ENCODE measurements at regions of chrX and their contacts with region 1.

Region 1: GRCh38 chrX:47650164-47651042 is at the start of gene ELK1:
- DNase-seq: peak; percentile 90 to 98
- H3K4me3 ChIP-seq: peak within 1 kb of the TSS; percentile 67 to 71
- H3K27ac ChIP-seq: peak within 1 kb of the TSS; percentile 85 to 87
- H3K4me1 ChIP-seq: peaks cover 0 to 7% of the 10 kb centered on the region in 2 donors
- H3K27me3 ChIP-seq: no peaks in the 10 kb centered on the region
- CTCF ChIP-seq: no peak
- total RNA-seq, gene ELK1: 146 TPM

Region 2: GRCh38 chrX:46693149-46693548 is 957.3 kb before region 1 on chrX:
- intact Hi-C with region 1: no loop called
- DNase-seq: no peak
- H3K4me3 ChIP-seq: no peak overlapping the region
- H3K27ac ChIP-seq: no peak overlapping the region
- H3K4me1 ChIP-seq: no peaks in the 10 kb centered on the region
- H3K27me3 ChIP-seq: no peaks in the 10 kb centered on the region
- CTCF ChIP-seq: no peak

Region 3: DNA sequence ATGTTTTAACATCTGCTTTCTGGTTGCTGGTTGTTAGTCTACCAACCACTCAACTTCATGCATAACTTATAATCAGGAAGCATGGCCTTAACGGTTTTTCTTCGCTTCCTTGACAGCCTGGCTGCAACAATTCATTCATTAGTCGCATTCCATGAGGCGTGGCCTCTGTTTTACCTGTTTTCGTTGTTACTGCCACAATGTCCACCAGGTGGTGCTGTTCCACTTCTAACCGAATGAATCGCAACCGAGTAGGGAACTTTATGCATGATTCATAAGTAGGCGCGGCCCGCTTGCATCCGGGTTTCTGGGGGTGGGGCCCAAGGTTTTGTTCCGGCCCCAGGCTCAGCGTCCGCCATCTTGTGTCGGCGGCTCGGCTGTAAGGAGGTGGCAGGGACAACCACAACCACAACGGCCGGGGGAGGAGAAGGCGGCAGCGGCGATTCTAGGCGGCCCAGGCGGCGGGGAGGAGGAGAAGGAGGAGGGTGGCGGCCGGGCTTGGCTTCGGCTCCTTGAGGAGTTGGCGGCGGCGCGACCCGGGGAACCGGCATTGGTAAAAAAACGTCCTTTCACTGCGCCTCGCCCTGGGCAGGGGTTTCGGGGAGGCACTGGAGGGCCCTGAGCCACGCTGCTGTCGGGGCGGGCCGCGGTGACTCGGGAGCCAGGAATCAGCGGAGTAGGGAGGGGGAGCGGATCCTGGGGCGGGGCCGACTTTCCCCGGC is 456.8 kb before region 1 on chrX and contains the start of gene UBA1:
- intact Hi-C with region 1: loop called (anchors 10 kb)
- DNase-seq: peak; percentile 92 to 99
- H3K4me3 ChIP-seq: peak within 1 kb of the TSS; percentile 72 to 99
- H3K27ac ChIP-seq: peak within 1 kb of the TSS; percentile 95 to 99
- H3K4me1 ChIP-seq: peaks cover 12 to 24% of the 10 kb centered on the region in 2 donors
- H3K27me3 ChIP-seq: no peaks in the 10 kb centered on the region
- CTCF ChIP-seq: peak; percentile 86 to 93 (median 90)
- total RNA-seq, gene UBA1: 162 TPM

Region 4: DNA sequence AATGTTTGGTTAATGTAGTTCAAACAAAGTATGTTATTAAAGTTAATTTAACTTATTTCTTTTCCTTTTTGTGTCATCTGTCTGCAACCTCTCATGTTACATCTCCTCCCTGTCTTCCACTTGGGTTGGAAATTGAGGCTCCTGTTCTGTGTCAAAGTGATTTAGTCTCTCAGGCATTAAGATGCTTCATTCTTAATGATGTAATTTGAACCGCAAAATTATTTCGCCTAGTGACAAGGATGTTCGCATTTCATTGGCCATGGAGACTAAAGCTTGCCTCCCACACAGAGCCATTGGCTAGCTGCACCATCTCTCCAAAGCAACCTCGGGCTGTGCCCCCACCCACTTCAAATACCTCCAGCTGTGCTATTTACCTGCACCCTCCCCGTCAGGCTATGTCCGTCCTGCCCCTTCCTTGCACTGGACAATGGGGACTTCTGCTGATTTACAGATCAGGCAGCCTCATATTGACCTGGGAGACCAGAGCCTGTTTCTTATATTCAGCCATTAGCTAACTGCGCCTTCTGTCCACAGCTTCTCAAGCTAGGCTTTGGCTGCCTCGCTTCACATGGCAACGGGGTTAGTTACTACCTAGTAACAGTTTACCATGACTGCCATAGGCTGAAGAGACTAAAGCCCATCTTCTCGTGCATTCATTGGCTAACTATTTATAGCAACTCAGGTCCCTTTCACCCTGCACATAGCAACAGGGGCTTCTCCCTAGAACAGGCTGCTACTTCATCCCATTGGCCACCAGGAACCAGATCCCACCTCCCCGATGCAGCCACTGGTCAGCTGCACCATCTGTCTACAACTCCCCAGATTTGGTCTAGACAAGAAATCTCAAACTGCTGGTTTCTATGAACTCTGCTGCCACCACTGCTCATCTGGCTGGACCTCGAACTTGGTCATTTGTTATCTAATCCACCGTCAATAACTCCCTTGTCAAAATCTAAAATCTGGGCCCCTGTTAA is 288.6 kb before region 1 on chrX:
- intact Hi-C with region 1: loop called (anchors 5 kb)
- DNase-seq: peak; percentile 74 to 91
- H3K4me3 ChIP-seq: peak overlapping the region; percentile 45 to 57
- H3K27ac ChIP-seq: peak overlapping the region; percentile 51 to 58
- H3K4me1 ChIP-seq: no peaks in the 10 kb centered on the region
- H3K27me3 ChIP-seq: no peaks in the 10 kb centered on the region
- CTCF ChIP-seq: peak in 1 of 3 experiments; percentile 19

Region 5: GRCh38 chrX:47467131-47467530 is 183.3 kb before region 1 on chrX:
- intact Hi-C with region 1: no loop called
- DNase-seq: no peak
- H3K4me3 ChIP-seq: no peak overlapping the region
- H3K27ac ChIP-seq: no peak overlapping the region
- H3K4me1 ChIP-seq: no peaks in the 10 kb centered on the region
- H3K27me3 ChIP-seq: no peaks in the 10 kb centered on the region
- CTCF ChIP-seq: no peak

Region 6: DNA sequence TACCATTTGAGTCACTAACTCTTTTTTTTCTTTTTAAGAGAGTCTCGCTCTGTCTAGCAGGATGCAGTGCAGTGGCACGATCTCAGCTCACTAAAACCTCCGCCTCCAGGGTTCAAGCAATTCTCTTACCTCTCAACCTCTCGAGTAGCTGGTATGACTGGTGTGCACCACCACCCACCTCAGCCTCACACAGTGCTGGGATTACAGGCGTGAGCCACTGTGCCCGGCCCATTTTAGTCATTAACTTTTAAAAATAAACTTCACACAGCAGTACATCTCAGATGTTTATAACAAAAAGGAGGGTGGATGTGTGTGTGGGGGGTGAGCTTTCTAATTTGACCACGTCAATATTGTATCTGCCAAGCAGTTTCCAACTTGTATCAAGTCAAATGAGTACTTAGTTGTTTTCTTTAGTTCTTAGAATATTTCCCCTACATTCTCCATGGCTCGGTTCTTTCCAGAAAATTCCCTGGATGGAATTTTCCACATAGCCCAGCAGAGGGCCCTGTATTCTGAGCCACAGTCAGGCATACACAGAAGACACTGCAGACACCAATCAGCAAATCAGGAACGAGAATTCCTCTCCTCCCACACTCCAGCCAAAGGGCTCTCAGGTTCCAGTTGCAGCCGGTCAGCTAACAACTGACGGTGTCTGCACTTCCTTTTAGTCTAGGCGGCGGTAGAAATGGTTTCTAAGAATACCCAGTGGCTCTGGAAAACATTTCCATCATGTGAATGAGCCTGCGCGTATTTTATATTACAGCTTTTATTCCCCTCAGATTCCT is 109.5 kb before region 1 on chrX:
- intact Hi-C with region 1: loop called (anchors 2 kb)
- DNase-seq: peak; percentile 54 to 90
- H3K4me3 ChIP-seq: no peak overlapping the region
- H3K27ac ChIP-seq: peak overlapping the region; percentile 82 to 88
- H3K4me1 ChIP-seq: peaks cover 0 to 6% of the 10 kb centered on the region in 2 donors
- H3K27me3 ChIP-seq: no peaks in the 10 kb centered on the region
- CTCF ChIP-seq: peak; percentile 38 to 44 (median 41)

Region 7: GRCh38 chrX:47836164-47837072 is 186.0 kb after region 1 on chrX and contains the start of gene ZNF81:
- intact Hi-C with region 1: loop called (anchors 10 kb)
- DNase-seq: peak; percentile 89 to 98
- H3K4me3 ChIP-seq: peak within 1 kb of the TSS; percentile 46 to 67
- H3K27ac ChIP-seq: peak within 1 kb of the TSS; percentile 44 to 48
- H3K4me1 ChIP-seq: no peaks in the 10 kb centered on the region
- H3K27me3 ChIP-seq: no peaks in the 10 kb centered on the region
- CTCF ChIP-seq: no peak
- total RNA-seq, gene ZNF81: 2.8 TPM